K562 (cell line): ENCODE measurements at regions of chr7 and their contacts with region 1.

Region 1: DNA sequence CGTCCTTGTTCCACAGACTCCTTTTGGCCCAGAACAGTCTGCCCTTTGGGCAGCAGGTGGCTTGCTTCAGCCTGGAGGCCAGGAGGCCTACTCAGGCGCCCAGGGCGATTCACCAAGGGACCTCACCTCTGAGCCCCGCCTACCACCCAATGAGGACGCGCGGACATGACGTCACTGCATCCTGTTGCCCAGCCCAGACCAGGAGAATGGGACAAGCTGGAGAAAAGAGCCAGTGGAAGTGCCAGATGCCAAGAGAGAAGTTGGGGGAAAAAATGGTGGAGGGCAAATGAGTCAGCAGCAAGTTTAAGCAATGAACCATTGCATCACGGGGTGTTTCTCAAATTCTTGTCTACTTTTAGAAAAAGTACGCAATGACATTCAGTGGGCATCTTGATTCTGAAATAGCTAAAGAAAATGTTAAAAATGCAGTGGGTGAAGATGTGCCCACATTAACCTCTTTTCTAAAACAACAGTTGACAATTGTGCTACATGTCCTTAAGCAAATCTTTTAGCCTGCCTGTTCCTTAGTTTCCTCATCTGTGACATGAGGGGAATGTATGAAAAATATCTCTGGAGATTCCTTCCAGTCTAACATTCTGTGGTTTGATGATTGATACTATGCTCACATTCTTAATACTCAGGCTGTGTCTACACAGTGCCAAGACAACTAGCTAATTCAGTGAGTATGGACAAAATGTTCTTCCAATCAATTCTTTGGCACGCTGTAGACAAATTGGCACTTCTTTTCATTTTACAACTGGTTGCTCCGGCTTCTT is 23.9 kb upstream of the LEP start:
- DNase-seq: peak; percentile 50 to 79 (median 69)
- ATAC-seq: peak; percentile 85
- H3K4me3 ChIP-seq: no peak overlapping the region
- H3K27ac ChIP-seq: no peak overlapping the region
- H3K4me1 ChIP-seq: peaks cover 0 to 4% of the 10 kb centered on the region in 2 experiments; a peak in 1 of 5 replicates
- H3K27me3 ChIP-seq: peaks cover 19 to 50% of the 10 kb centered on the region in 2 experiments
- CTCF ChIP-seq: no peak
- EP300 ChIP-seq: no peak
- POLR2A ChIP-seq: no peak
- RAD21 ChIP-seq: no peak

Region 2: GRCh38 chr7:128322040-128322643 is 104.9 kb after region 1 on chr7:
- CTCF ChIA-PET with region 1: no interaction called
- POLR2A ChIA-PET with region 1: no interaction called
- in situ Hi-C with region 1: no loop called
- intact Hi-C with region 1: loop called (anchors 5 kb)
- DNase-seq: peak in 1 of 4 experiments; percentile 51
- ATAC-seq: peak; percentile 90
- H3K4me3 ChIP-seq: no peak overlapping the region
- H3K27ac ChIP-seq: no peak overlapping the region
- H3K4me1 ChIP-seq: no peaks in the 10 kb centered on the region; a peak in 1 of 5 replicates
- H3K27me3 ChIP-seq: no peaks in the 10 kb centered on the region
- CTCF ChIP-seq: peak; percentile 42 to 70 (median 60); a peak in 5 of 6 replicates
- EP300 ChIP-seq: no peak
- POLR2A ChIP-seq: no peak
- RAD21 ChIP-seq: peak; percentile 53 to 69